ENCODE measurements at regions of chr12 and their contacts with region 1.

Region 1: GRCh38 chr12:6423267-6424007 is 21.3 kb upstream of the CD27 start:
- DNase-seq: peak; percentile 80 to 90 (median 88)
- H3K4me3 ChIP-seq: no peak overlapping the region
- H3K27ac ChIP-seq: no peak overlapping the region
- H3K4me1 ChIP-seq: peaks cover 6% of the 10 kb centered on the region
- H3K27me3 ChIP-seq: no peaks in the 10 kb centered on the region
- CTCF ChIP-seq: peak; percentile 70 to 93 (median 86)
- EP300 ChIP-seq: no peak
- POLR2A ChIP-seq: peak; percentile 36

Region 2: DNA sequence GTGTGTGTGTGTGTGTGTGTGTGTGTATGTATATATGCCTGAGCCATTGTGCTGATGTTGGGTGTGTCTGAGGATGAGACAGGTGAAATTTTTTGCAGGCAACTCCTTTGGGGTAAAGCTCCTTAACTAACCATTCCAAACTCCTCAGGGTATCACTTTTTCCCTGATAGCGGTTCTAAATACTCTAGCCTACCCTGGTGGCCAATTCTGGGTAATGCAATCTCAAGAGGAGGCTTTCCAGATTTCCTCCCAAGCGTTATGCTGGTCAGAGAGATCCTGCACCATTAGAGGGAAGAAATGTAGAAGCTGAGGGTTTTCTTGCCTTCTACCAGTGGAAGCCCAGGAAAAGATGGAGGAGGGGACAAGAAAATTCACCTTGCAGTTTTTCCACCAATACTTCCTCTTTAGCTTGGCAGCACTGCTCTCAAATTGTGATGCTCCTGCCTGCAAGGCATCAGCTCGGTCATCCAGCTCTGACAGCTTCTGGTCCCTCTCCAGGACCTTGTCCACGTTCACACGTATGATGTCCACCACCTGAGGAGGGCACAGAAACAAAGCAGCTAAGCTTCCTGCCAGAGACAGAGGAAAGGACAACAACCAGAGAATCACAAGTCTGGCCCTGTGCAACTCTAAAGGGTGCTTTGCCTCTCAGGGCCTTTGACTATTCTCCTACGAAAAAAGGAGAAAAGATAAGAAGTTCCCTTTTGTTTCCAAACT is 42.2 kb after region 1 on chr12:
- intact Hi-C with region 1: loop called (anchors 2 to 5 kb)
- DNase-seq: peak in 3 of 5 donors; percentile 31 to 68 (median 47)
- H3K4me3 ChIP-seq: no peak overlapping the region
- H3K27ac ChIP-seq: no peak overlapping the region
- H3K4me1 ChIP-seq: peaks cover 3% of the 10 kb centered on the region
- H3K27me3 ChIP-seq: no peaks in the 10 kb centered on the region
- CTCF ChIP-seq: peak; percentile 69 to 87 (median 84)
- EP300 ChIP-seq: no peak
- POLR2A ChIP-seq: no peak

Region 3: GRCh38 chr12:6533923-6534694 is 110.7 kb after region 1 on chr12 and contains the start of gene GAPDH:
- intact Hi-C with region 1: loop called in 3 of 4 experiments (anchors 5 kb)
- DNase-seq: peak; percentile 91 to 94 (median 93)
- H3K4me3 ChIP-seq: peak within 1 kb of the TSS; percentile 62
- H3K27ac ChIP-seq: peak within 1 kb of the TSS; percentile 93 to 96
- H3K4me1 ChIP-seq: peaks cover 14% of the 10 kb centered on the region
- H3K27me3 ChIP-seq: no peaks in the 10 kb centered on the region
- CTCF ChIP-seq: peak in 1 of 3 donors; percentile 37
- EP300 ChIP-seq: no peak
- POLR2A ChIP-seq: peak; percentile 97
- total RNA-seq, gene GAPDH: 661 to 1,442 (median 1,249) TPM